HepG2 (cell line): ENCODE measurements at regions of chr20 and their contacts with region 1.

Region 1: GRCh38 chr20:31698803-31699718 is 23.6 kb downstream of the BCL2L1 start:
- DNase-seq: peak; percentile 76
- ATAC-seq: peak; percentile 15
- H3K4me3 ChIP-seq: no peak overlapping the region
- H3K27ac ChIP-seq: peak overlapping the region; percentile 83
- H3K4me1 ChIP-seq: peaks cover 100% of the 10 kb centered on the region
- H3K27me3 ChIP-seq: no peaks in the 10 kb centered on the region
- CTCF ChIP-seq: no peak
- EP300 ChIP-seq: peak in 1 of 2 experiments; percentile 71; a peak in 2 of 4 replicates
- POLR2A ChIP-seq: peak in 1 of 2 experiments; percentile 33; a peak in 1 of 4 replicates
- RAD21 ChIP-seq: no peak

Region 2: GRCh38 chr20:31572701-31573554 is 126.1 kb before region 1 on chr20:
- CTCF ChIA-PET with region 1: no interaction called
- POLR2A ChIA-PET with region 1: interaction called, 14 read pairs
- in situ Hi-C with region 1: no loop called
- intact Hi-C with region 1: no loop called
- DNase-seq: peak; percentile 100
- ATAC-seq: peak; percentile 74
- H3K4me3 ChIP-seq: peak overlapping the region; percentile 70 to 88 (median 80)
- H3K27ac ChIP-seq: peak overlapping the region; percentile 86
- H3K4me1 ChIP-seq: peaks cover 68% of the 10 kb centered on the region
- H3K27me3 ChIP-seq: no peaks in the 10 kb centered on the region; a peak in 1 of 5 replicates
- CTCF ChIP-seq: no peak; the same call in 1 of the 2 replicates
- EP300 ChIP-seq: peak; percentile 89 to 96; a peak in 3 of 4 replicates
- POLR2A ChIP-seq: peak; percentile 80 to 89
- RAD21 ChIP-seq: peak; percentile 97

Region 3: GRCh38 chr20:31661625-31662371 is 37.3 kb before region 1 on chr20:
- CTCF ChIA-PET with region 1: interaction called, 4 read pairs
- POLR2A ChIA-PET with region 1: interaction called, 1,981 read pairs
- in situ Hi-C with region 1: no loop called
- intact Hi-C with region 1: loop called (anchors 5 kb)
- DNase-seq: peak; percentile 76
- ATAC-seq: peak; percentile 36
- H3K4me3 ChIP-seq: peak overlapping the region; percentile 20 to 66 (median 40)
- H3K27ac ChIP-seq: peak overlapping the region; percentile 41
- H3K4me1 ChIP-seq: peaks cover 64% of the 10 kb centered on the region
- H3K27me3 ChIP-seq: no peaks in the 10 kb centered on the region
- CTCF ChIP-seq: peak; percentile 91
- EP300 ChIP-seq: no peak
- POLR2A ChIP-seq: peak; percentile 56 to 87; a peak in 3 of 4 replicates
- RAD21 ChIP-seq: peak; percentile 91; the same call in 1 of the 2 replicates

Region 4: GRCh38 chr20:31684153-31685015 is 14.7 kb before region 1 on chr20:
- CTCF ChIA-PET with region 1: interaction called, 3 read pairs
- POLR2A ChIA-PET with region 1: interaction called, 2,822 read pairs
- in situ Hi-C with region 1: no loop called
- intact Hi-C with region 1: no loop called
- DNase-seq: no peak
- ATAC-seq: 0 out of 3 replicates have a peak, but pooled peaks have one; percentile 3
- H3K4me3 ChIP-seq: no peak overlapping the region
- H3K27ac ChIP-seq: no peak overlapping the region
- H3K4me1 ChIP-seq: peaks cover 80% of the 10 kb centered on the region
- H3K27me3 ChIP-seq: no peaks in the 10 kb centered on the region
- CTCF ChIP-seq: no peak
- EP300 ChIP-seq: no peak
- POLR2A ChIP-seq: peak in 1 of 2 experiments; percentile 62; a peak in 2 of 4 replicates
- RAD21 ChIP-seq: no peak

Region 5: GRCh38 chr20:31738729-31739561 is 39.9 kb after region 1 on chr20 and contains the start of gene TPX2:
- CTCF ChIA-PET with region 1: no interaction called
- POLR2A ChIA-PET with region 1: interaction called, 19 read pairs
- in situ Hi-C with region 1: no loop called
- intact Hi-C with region 1: no loop called
- DNase-seq: peak; percentile 99
- ATAC-seq: peak; percentile 99
- H3K4me3 ChIP-seq: peak within 1 kb of the TSS; percentile 90 to 97 (median 93)
- H3K27ac ChIP-seq: peak within 1 kb of the TSS; percentile 84
- H3K4me1 ChIP-seq: peaks cover 34% of the 10 kb centered on the region
- H3K27me3 ChIP-seq: peaks cover 0 to 3% of the 10 kb centered on the region in 2 experiments; a peak in 2 of 5 replicates
- CTCF ChIP-seq: peak; percentile 68
- EP300 ChIP-seq: no peak; a peak in 1 of 4 replicates
- POLR2A ChIP-seq: peak; percentile 87 to 95
- RAD21 ChIP-seq: peak; percentile 76
- total RNA-seq, gene TPX2: 124 and 190 TPM in 2 replicates